ENCODE measurements at regions of chr13 and their contacts with region 1.

Region 1: DNA sequence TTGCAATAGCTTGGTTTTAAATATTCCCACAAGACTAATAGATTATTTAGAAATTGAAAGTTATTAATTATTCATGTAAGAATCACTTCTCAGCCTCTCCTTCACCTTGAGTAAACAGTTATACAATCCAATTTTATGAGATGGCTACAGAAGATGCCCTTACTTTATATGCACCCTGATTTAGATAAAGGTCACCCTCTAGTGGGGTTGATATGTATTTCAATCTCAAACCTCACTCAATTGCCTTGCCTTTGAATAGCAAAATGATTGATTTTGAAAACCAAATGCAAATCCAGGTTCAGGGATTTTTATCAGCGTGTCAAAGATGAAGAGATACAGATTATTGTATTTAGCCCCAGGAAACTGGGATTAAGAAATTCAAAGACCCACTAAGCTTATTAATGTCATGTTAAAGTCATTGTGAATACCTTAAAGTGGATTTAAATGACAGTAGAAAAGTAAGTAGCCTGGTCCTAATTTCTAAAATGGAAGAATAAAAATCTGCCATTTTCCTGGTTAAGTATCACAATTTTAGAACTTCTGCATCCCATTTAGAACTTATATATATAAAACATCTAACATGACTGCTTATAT is 305.1 kb downstream of the ITGBL1 start:
- DNase-seq: peak; percentile 7
- H3K4me3 ChIP-seq: no peak overlapping the region
- H3K27ac ChIP-seq: no peak overlapping the region
- H3K4me1 ChIP-seq: no peaks in the 10 kb centered on the region
- CTCF ChIP-seq: peak; percentile 65

Region 2: GRCh38 chr13:101144808-101145419 is 612.6 kb before region 1 on chr13:
- CTCF ChIA-PET with region 1: no interaction called
- POLR2A ChIA-PET with region 1: no interaction called
- intact Hi-C with region 1: loop called (anchors 5 kb)
- DNase-seq: peak; percentile 38
- H3K4me3 ChIP-seq: no peak overlapping the region
- H3K27ac ChIP-seq: no peak overlapping the region
- H3K4me1 ChIP-seq: no peaks in the 10 kb centered on the region
- CTCF ChIP-seq: peak; percentile 77

Region 3: GRCh38 chr13:101773062-101773461 is 15.5 kb after region 1 on chr13:
- CTCF ChIA-PET with region 1: no interaction called
- POLR2A ChIA-PET with region 1: no interaction called
- intact Hi-C with region 1: no loop called
- DNase-seq: no peak
- H3K4me3 ChIP-seq: no peak overlapping the region
- H3K27ac ChIP-seq: no peak overlapping the region
- H3K4me1 ChIP-seq: no peaks in the 10 kb centered on the region
- CTCF ChIP-seq: no peak

Measured in OCI-LY7 (cell line).